ENCODE measurements at regions of chr14 and their contacts with region 1.

Region 1: DNA sequence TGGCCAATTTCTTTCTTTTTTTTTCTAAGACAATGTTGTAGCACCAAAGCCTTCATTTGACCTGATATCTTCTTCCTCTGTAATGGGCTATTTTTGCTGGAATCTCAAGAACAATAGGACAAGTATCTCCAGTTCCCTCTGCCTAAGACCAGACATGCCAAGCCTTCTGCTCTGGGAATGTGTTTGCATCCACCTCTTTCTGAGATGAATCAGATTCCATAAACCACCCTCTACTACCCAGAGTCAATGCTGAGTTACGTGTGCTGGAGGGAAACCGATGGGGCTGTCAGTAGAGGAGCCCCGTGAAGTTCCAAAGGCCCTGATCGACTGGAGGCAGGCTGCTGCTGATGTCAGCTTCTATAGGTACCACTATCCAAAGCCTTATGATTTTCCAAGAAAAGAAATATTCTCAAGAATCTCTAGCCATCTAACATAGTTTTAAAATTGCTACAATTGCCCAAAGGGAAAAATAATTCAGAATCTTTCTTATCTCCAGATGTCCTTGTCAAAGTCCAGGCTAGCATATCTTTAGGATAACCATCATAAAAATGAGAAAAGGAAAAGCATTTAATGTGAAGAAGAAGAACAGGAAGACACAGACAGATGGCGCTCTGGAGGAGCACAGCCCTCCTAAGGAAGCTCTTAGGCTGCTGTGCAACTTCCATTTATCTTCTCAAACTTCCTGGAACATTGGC is 101.9 kb downstream of the SLC8A3 start:
- DNase-seq: no peak
- H3K4me3 ChIP-seq: no peak overlapping the region
- H3K27me3 ChIP-seq: no peaks in the 10 kb centered on the region
- CTCF ChIP-seq: peak; percentile 66

Region 2: DNA sequence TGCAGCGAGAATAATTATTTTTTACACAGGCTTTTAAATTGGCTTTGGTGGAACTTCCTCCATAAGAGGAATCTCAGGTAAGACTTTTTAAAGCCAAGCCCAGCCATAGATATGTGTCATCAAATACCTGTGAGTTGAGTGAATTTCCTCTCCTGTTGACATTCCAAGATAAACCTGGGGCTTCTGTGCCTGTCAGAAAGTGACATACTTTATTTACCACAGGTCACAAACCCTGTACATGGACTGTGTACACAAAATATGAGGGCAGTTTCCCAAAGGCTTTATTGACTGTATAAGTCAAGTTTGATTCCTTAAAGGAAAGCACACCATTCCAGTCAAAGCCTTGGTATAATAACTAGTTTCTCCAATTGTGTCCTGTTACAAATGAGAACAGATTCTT is 345.8 kb before region 1 on chr14:
- CTCF ChIA-PET with region 1: no interaction called
- POLR2A ChIA-PET with region 1: no interaction called
- DNase-seq: no peak
- H3K4me3 ChIP-seq: no peak overlapping the region
- H3K27me3 ChIP-seq: peaks cover 2% of the 10 kb centered on the region; the same call in 1 of the 2 replicates
- CTCF ChIP-seq: no peak

Region 3: GRCh38 chr14:70073924-70074566 is 12.8 kb before region 1 on chr14:
- CTCF ChIA-PET with region 1: interaction called, 12 read pairs
- POLR2A ChIA-PET with region 1: no interaction called
- DNase-seq: no peak
- H3K4me3 ChIP-seq: no peak overlapping the region
- H3K27me3 ChIP-seq: no peaks in the 10 kb centered on the region
- CTCF ChIP-seq: peak; percentile 76

Region 4: DNA sequence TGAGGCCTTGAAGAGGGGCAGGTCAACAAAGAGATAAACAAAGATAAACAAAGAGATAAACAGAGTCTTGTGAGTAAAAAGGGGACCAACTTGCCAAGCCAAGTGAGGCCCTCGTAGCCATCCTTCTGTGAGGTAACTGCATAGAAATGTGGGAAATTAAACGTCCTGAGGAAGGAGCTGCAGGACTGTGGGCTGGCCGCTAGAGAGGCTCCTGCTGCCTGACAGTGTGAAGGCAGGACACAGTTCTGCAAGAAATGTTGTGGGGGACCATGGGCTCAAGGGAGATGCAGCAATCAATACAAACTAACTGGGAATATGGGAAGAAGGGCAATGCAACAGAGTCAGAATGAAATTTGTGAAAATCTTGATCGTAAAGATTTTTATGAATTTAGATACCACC is 10.0 kb after region 1 on chr14:
- CTCF ChIA-PET with region 1: interaction called, 11 read pairs
- POLR2A ChIA-PET with region 1: no interaction called
- DNase-seq: no peak
- H3K4me3 ChIP-seq: no peak overlapping the region
- H3K27me3 ChIP-seq: no peaks in the 10 kb centered on the region
- CTCF ChIP-seq: peak; percentile 44

Region 5: DNA sequence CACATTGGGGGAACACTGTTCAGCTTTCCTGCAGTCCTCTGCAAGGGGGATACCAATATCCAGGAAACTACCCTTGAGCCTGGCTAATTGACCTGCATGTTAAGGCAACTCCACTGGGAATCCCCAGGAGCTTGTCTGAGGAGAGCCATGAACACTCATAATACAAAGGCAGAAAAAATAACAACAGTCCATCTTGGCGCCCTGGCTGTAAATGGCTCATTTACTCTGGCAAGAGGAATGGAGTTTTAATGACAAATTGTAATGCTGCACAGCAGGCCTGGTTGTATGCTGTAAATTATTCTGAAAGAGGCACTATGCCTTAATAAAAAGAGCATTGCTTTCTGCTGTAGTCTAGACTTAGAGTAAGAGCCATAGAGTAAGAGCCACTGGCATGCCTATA is 43.6 kb after region 1 on chr14:
- CTCF ChIA-PET with region 1: no interaction called
- POLR2A ChIA-PET with region 1: no interaction called
- DNase-seq: no peak
- H3K4me3 ChIP-seq: no peak overlapping the region
- H3K27me3 ChIP-seq: no peaks in the 10 kb centered on the region
- CTCF ChIP-seq: no peak

Region 6: DNA sequence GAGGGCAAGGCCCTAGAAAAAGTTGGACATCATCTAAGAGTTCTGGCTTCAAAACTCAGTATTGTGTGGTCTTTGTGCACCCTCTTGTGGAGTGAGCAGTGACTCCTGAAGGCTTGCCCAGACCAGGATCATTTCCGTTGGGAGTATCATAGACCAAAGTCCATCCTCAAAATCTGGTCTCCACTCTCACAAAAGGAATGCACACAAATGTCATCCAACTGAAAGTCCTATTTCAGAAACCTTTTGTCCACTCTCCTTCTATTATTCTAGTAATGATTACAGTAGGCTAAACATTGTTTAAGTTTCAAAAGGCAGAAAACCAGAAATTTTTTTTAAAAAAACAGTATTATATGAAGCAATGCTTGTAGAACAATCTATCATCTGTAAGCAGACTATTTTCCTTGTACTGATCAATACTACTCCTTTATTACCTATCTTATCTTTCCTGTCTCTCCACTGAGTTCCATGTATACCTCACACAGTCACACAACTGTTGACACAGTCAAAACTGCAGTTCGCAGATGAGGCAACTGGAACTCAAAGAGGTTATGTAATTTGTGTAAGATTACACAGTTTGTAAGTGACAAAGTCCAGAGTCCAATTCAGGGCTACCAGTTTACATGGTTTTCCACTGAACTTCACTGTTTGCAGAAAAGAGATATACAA is 231.3 kb after region 1 on chr14:
- CTCF ChIA-PET with region 1: interaction called, 19 read pairs
- POLR2A ChIA-PET with region 1: no interaction called
- DNase-seq: peak; percentile 4
- H3K4me3 ChIP-seq: no peak overlapping the region
- H3K27me3 ChIP-seq: no peaks in the 10 kb centered on the region
- CTCF ChIP-seq: peak; percentile 57